ENCODE measurements at regions of chr18 and their contacts with region 1.

Region 1: DNA sequence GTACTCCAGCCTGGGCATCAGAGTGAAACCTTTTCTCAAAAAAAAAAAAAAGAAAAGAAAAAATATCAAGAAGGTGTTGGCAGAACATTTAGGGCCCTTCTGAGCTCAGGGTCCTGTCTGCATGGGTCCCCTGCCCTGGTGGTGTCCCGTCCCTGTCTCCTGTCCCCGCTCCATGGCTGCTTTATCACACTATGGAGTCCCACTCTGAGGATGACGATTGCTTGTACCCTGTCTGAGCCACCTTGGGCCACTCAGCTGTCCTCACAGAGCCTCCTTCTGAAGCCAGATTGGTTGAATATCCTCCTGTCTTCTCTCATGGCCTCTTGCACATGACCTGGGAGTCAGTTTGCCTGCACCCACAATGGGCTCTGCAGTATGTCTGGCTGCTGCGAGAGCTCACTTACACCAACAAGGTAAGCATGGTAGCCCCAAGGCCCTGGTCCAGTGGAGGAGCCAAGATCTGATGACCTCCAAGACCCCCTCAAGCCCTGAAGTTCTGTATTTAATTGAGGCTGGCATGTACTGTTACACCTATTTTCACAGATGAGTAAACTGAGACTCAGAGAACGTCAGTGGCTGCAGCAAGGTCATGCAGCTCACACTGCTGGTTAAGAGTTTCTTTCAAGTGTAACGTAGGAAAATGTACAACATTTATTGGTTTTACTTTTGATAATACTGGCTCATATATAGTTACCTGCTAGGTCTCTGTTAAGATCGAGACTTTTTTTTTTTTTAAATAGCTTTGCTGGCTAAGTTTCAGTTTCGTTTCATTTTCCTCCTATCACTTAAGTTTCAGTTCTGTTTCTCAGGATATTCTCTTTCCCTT is 16.9 kb upstream of the ZCCHC2 start:
- DNase-seq: peak in 10 of 14 experiments; percentile 2 to 74 (median 35)
- ATAC-seq: peak; percentile 68
- H3K4me3 ChIP-seq: peak overlapping the region; percentile 57
- H3K4me3 Mint-ChIP-seq: peak overlapping the region; percentile 92
- H3K27ac ChIP-seq: peak overlapping the region; percentile 51 to 84
- H3K27ac Mint-ChIP-seq: peak overlapping the region; percentile 96
- H3K4me1 ChIP-seq: peaks cover 16% of the 10 kb centered on the region
- H3K4me1 Mint-ChIP-seq: peaks cover 20% of the 10 kb centered on the region
- H3K27me3 ChIP-seq: no peaks in the 10 kb centered on the region
- H3K27me3 Mint-ChIP-seq: no peaks in the 10 kb centered on the region
- CTCF ChIP-seq: no peak

Region 2: DNA sequence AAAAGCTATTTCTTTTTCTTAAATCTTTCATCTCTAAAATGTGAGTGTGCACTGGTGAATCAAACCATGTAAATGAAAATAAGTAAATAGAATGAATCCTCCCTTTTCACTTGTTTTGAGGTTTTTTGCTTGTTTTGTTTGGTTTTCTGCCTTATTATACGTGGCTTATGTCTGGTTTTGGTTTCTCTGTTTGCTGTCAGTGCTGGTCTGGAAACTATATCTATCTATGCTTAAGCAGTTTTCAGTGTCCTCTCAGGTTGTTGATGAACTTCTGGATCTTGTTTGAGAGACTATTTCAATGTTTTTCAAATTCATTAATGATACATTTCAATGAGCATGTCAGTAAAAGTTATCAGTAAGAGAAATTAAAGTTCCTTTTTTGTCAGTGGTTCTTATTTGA is 228.8 kb before region 1 on chr18:
- CTCF ChIA-PET with region 1: no interaction called
- POLR2A ChIA-PET with region 1: no interaction called
- intact Hi-C with region 1: no loop called
- DNase-seq: no peak
- ATAC-seq: no peak
- H3K4me3 ChIP-seq: no peak overlapping the region
- H3K4me3 Mint-ChIP-seq: no peak overlapping the region
- H3K27ac ChIP-seq: no peak overlapping the region
- H3K27ac Mint-ChIP-seq: no peak overlapping the region
- H3K4me1 ChIP-seq: no peaks in the 10 kb centered on the region
- H3K4me1 Mint-ChIP-seq: no peaks in the 10 kb centered on the region
- H3K27me3 ChIP-seq: no peaks in the 10 kb centered on the region
- H3K27me3 Mint-ChIP-seq: no peaks in the 10 kb centered on the region
- CTCF ChIP-seq: no peak

Region 3: DNA sequence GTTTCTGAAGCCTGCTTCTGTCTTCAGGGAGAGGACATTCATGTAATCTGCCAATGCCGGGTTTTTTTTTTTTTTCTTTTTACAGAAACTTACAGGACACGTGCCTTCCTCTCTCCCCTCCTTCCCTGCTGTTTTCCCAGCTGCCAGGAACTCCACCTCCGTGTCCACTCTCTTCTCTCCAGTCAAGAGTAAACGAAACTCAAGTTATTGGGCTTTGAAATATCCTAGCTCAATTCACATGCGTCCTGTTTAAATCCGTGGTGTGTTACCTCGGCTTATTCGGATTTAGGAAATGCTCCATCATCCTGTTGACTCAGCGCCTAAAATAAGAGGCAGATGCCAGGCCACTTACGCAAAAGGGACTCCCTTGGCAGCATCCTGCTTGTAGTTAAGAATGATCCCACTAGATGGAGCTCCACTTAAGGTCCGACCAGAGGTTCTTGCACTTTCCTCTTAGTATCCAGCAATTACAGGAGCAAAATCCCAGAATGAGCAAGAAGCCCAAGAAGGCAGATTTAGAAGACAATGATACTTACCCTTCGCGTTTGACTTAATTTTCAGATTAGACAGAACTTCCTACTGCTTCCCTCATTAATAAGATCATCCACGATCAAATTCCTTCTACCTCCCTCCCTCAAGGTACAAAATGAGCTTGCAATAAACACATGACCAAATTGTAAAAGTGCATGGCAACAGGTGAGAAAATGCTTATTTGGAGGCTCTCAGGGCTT is 80.3 kb before region 1 on chr18:
- CTCF ChIA-PET with region 1: interaction called, 5 read pairs
- POLR2A ChIA-PET with region 1: interaction called, 13 read pairs
- intact Hi-C with region 1: no loop called
- DNase-seq: peak in 13 of 14 experiments; percentile 5 to 85 (median 31)
- ATAC-seq: peak; percentile 51
- H3K4me3 ChIP-seq: no peak overlapping the region
- H3K4me3 Mint-ChIP-seq: no peak overlapping the region
- H3K27ac ChIP-seq: no peak overlapping the region
- H3K27ac Mint-ChIP-seq: no peak overlapping the region
- H3K4me1 ChIP-seq: peaks cover 12% of the 10 kb centered on the region
- H3K4me1 Mint-ChIP-seq: peaks cover 18% of the 10 kb centered on the region
- H3K27me3 ChIP-seq: no peaks in the 10 kb centered on the region
- H3K27me3 Mint-ChIP-seq: no peaks in the 10 kb centered on the region
- CTCF ChIP-seq: peak; percentile 83

Measured in CD4-positive, alpha-beta T cell (primary cell).